ENCODE measurements at regions of chr3 and their contacts with region 1.

Region 1: GRCh38 chr3:107740992-107741896 is 218.5 kb downstream of the BBX start:
- DNase-seq: no peak
- H3K4me3 ChIP-seq: no peak overlapping the region
- H3K4me3 Mint-ChIP-seq: no peak overlapping the region
- H3K27ac ChIP-seq: no peak overlapping the region
- H3K27ac Mint-ChIP-seq: no peak overlapping the region
- H3K4me1 ChIP-seq: no peaks in the 10 kb centered on the region
- H3K4me1 Mint-ChIP-seq: peaks cover 11% of the 10 kb centered on the region
- H3K27me3 ChIP-seq: no peaks in the 10 kb centered on the region
- H3K27me3 Mint-ChIP-seq: no peaks in the 10 kb centered on the region
- CTCF ChIP-seq: peak; percentile 31

Region 2: DNA sequence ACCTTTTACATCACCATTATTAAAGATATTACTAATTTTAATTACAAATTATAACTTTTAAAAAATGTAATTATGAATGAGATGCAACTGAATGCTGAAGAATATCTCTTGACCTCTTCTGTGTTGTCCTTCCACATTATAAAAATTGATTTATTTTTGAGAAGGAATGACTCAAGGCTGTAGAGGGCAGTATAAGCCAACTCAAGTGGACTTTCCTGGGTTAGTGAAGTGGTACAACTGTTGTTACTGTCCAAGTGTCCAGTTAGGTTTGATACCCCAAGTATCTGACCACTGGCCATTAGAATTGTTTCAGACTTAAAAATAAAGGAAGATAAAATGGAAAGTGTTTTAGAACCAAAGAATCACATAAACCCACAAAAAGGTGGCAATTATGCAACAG is 166.6 kb before region 1 on chr3:
- intact Hi-C with region 1: loop called in 1 of 2 experiments (anchors 10 kb)
- DNase-seq: peak; percentile 12 to 39 (median 36)
- H3K4me3 ChIP-seq: no peak overlapping the region
- H3K4me3 Mint-ChIP-seq: no peak overlapping the region
- H3K27ac ChIP-seq: no peak overlapping the region
- H3K27ac Mint-ChIP-seq: no peak overlapping the region
- H3K4me1 ChIP-seq: no peaks in the 10 kb centered on the region
- H3K4me1 Mint-ChIP-seq: peaks cover 2% of the 10 kb centered on the region
- H3K27me3 ChIP-seq: no peaks in the 10 kb centered on the region
- H3K27me3 Mint-ChIP-seq: no peaks in the 10 kb centered on the region
- CTCF ChIP-seq: peak; percentile 61

Region 3: DNA sequence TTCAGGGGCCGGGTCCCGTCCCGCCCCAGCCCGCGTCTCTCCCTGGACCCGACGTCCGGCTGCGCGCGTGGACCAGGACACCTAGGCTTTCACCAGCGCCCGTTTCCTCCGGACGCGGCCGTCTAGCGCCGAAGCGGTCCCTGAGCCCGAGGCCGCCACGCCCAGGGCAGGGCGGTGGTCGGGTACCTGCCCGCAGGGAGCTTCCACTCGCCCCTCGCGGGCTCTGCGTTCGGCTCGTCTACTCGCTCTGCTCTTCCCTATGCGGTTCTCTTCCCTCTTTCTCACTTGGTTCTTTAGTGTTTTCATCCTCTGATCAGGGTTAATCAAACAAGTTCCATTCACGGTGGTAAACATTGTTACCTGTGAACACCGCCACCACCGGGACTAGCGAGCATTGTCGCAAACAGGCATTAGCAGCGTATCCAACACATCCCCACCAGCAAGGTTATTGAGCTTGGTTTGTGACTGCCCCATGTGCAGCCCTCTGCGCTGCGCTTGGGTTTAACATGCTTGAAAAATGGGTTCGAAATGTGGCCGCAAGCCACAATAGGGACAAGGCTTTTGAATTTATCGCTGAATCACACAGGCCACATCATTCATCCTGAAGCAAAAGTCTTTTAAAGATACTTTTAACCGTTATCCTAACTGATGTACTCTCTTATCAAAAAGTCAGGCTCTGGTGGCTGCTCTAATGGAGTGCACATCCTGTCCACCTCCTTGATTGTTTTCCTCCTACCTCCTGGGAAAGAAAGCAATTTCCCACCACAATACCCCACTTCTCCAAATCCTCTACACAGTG is 350.4 kb after region 1 on chr3:
- intact Hi-C with region 1: no loop called
- DNase-seq: peak in 1 of 3 donors; percentile 7
- H3K4me3 ChIP-seq: peak overlapping the region; percentile 57 to 94 (median 82)
- H3K4me3 Mint-ChIP-seq: peak overlapping the region; percentile 76 to 91
- H3K27ac ChIP-seq: peak overlapping the region; percentile 39 to 96
- H3K27ac Mint-ChIP-seq: peak overlapping the region; percentile 80 to 90 (median 86)
- H3K4me1 ChIP-seq: peaks cover 18 to 33% of the 10 kb centered on the region in 2 donors
- H3K4me1 Mint-ChIP-seq: peaks cover 16% of the 10 kb centered on the region
- H3K27me3 ChIP-seq: no peaks in the 10 kb centered on the region
- H3K27me3 Mint-ChIP-seq: peaks cover 2 to 6% (median 3%) of the 10 kb centered on the region in 3 donors
- CTCF ChIP-seq: no peak

Measured in CD14-positive monocyte (primary cell).